ENCODE measurements at regions of chr22 and their contacts with region 1.

Region 1: GRCh38 chr22:37260901-37261336 is 16.9 kb upstream of the RAC2 start:
- DNase-seq: peak; percentile 68
- ATAC-seq: peak; percentile 52
- H3K4me3 Mint-ChIP-seq: peak overlapping the region; percentile 41
- H3K27ac Mint-ChIP-seq: peak overlapping the region; percentile 39
- H3K4me1 Mint-ChIP-seq: peaks cover 21% of the 10 kb centered on the region
- H3K27me3 Mint-ChIP-seq: peaks cover 7% of the 10 kb centered on the region

Region 2: GRCh38 chr22:37166675-37167066 is 94.2 kb before region 1 on chr22:
- POLR2A ChIA-PET with region 1: no interaction called
- DNase-seq: peak; percentile 87
- ATAC-seq: peak; percentile 49
- H3K4me3 Mint-ChIP-seq: peak overlapping the region; percentile 80
- H3K27ac Mint-ChIP-seq: peak overlapping the region; percentile 89
- H3K4me1 Mint-ChIP-seq: peaks cover 87% of the 10 kb centered on the region
- H3K27me3 Mint-ChIP-seq: no peaks in the 10 kb centered on the region

Region 3: GRCh38 chr22:37237371-37238268 is 23.3 kb before region 1 on chr22:
- POLR2A ChIA-PET with region 1: interaction called, 46 read pairs
- DNase-seq: no peak
- ATAC-seq: no peak
- H3K4me3 Mint-ChIP-seq: peak overlapping the region; percentile 100
- H3K27ac Mint-ChIP-seq: peak overlapping the region; percentile 100
- H3K4me1 Mint-ChIP-seq: peaks cover 84% of the 10 kb centered on the region
- H3K27me3 Mint-ChIP-seq: no peaks in the 10 kb centered on the region